ENCODE measurements at regions of chr1 and their contacts with region 1.

Region 1: GRCh38 chr1:204128964-204129896 is 22.6 kb downstream of the ETNK2 start:
- DNase-seq: peak; percentile 76
- H3K4me3 Mint-ChIP-seq: no peak overlapping the region
- H3K27ac Mint-ChIP-seq: no peak overlapping the region
- H3K4me1 Mint-ChIP-seq: peaks cover 7% of the 10 kb centered on the region
- H3K27me3 Mint-ChIP-seq: no peaks in the 10 kb centered on the region

Region 2: GRCh38 chr1:203861379-203862184 is 267.6 kb before region 1 on chr1 and contains the start of gene SNRPE:
- CTCF ChIA-PET with region 1: interaction called, 58 read pairs
- POLR2A ChIA-PET with region 1: interaction called, 5 read pairs
- intact Hi-C with region 1: loop called (anchors 1 kb)
- DNase-seq: peak; percentile 98
- H3K4me3 Mint-ChIP-seq: peak within 1 kb of the TSS; percentile 93
- H3K27ac Mint-ChIP-seq: peak within 1 kb of the TSS; percentile 90
- H3K4me1 Mint-ChIP-seq: peaks cover 10% of the 10 kb centered on the region
- H3K27me3 Mint-ChIP-seq: no peaks in the 10 kb centered on the region
- total RNA-seq, gene SNRPE: 327 to 339 TPM

Region 3: DNA sequence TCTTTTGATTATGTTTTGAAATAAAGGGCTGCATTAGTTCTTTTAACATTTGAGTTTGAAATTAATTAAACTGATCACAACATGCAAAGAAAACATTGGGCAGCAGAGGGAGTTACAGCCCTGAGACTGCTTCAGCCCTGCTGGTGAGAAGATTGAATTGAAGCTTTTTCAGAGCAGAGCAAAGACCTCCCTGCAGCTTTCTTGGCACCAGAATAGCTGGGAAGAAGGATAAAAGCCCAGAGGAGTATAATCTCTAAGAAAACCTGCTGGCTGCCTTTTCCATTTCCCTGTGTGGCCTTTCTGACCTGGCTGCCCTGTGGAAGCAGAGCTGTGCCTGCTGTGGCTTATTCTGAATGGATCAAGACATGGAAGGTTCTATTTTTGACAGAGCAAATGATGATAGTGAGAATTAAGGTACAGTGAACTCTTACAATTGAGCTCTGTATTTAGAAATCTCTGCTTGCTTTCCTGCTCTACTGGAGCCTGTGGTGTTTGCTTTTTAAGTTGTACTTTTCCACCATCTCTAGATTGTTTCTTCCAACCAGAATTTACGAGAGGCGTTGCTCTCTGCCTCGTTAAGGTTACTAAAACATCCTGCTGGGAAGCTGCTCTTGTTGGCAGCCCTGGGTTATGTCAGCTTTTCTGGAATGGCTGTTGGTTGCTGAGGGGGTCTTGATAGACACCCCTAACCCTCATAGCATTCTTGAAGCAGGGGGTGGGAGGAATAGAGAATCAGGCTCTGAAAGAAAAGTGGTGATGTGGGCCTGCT is 257.9 kb before region 1 on chr1:
- CTCF ChIA-PET with region 1: interaction called, 27 read pairs
- POLR2A ChIA-PET with region 1: interaction called, 3 read pairs
- intact Hi-C with region 1: no loop called
- DNase-seq: no peak
- H3K4me3 Mint-ChIP-seq: no peak overlapping the region
- H3K27ac Mint-ChIP-seq: no peak overlapping the region
- H3K4me1 Mint-ChIP-seq: no peaks in the 10 kb centered on the region
- H3K27me3 Mint-ChIP-seq: no peaks in the 10 kb centered on the region

Region 4: GRCh38 chr1:204072931-204073836 is 56.0 kb before region 1 on chr1 and contains the start of gene SOX13:
- CTCF ChIA-PET with region 1: interaction called, 4 read pairs
- POLR2A ChIA-PET with region 1: no interaction called
- intact Hi-C with region 1: loop called (anchors 10 kb)
- DNase-seq: peak; percentile 48
- H3K4me3 Mint-ChIP-seq: peak within 1 kb of the TSS; percentile 78
- H3K27ac Mint-ChIP-seq: no peak within 1 kb of the TSS
- H3K4me1 Mint-ChIP-seq: peaks cover 19% of the 10 kb centered on the region
- H3K27me3 Mint-ChIP-seq: peaks cover 48% of the 10 kb centered on the region
- total RNA-seq, gene SOX13: 4.6 to 5.8 TPM

Region 5: DNA sequence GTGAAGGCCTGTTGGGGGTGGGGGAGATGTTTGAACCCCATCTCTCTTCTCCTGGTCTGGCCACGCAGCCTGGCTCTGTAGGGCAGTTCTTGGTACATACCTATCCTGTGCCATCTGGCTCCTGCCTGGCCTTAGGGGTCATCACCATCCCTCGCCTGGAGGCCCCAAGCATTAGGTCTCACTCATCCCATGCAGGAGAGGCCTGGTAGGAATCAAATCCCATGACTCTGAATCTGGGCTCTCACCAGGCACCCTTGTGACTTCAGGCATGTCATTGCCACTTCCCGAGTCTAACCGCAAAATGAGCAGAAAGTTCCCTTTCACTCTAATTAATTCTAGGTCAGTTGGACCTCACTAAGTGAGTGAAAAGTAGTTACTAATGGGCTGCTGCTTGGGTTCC is 14.6 kb before region 1 on chr1:
- CTCF ChIA-PET with region 1: interaction called, 12 read pairs
- POLR2A ChIA-PET with region 1: no interaction called
- intact Hi-C with region 1: no loop called
- DNase-seq: no peak
- H3K4me3 Mint-ChIP-seq: no peak overlapping the region
- H3K27ac Mint-ChIP-seq: no peak overlapping the region
- H3K4me1 Mint-ChIP-seq: no peaks in the 10 kb centered on the region
- H3K27me3 Mint-ChIP-seq: no peaks in the 10 kb centered on the region

Region 6: GRCh38 chr1:204323887-204324286 is 194.7 kb after region 1 on chr1:
- CTCF ChIA-PET with region 1: no interaction called
- POLR2A ChIA-PET with region 1: no interaction called
- intact Hi-C with region 1: no loop called
- DNase-seq: peak; percentile 84
- H3K4me3 Mint-ChIP-seq: no peak overlapping the region
- H3K27ac Mint-ChIP-seq: peak overlapping the region; percentile 68
- H3K4me1 Mint-ChIP-seq: peaks cover 30% of the 10 kb centered on the region
- H3K27me3 Mint-ChIP-seq: peaks cover 10% of the 10 kb centered on the region

Measured in activated CD4-positive, alpha-beta memory T cell treated with anti-CD3 and anti-CD28 coated beads for 36 hours (primary cell).